HEK293 (cell line): ENCODE measurements at regions of chr14 and their contacts with region 1.

Region 1: GRCh38 chr14:69153131-69153872 is 383 bp upstream of the DCAF5 start:
- H3K4me3 ChIP-seq: peak overlapping the region; percentile 92
- H3K27ac ChIP-seq: peak overlapping the region; percentile 96
- H3K4me1 ChIP-seq: peaks cover 19% of the 10 kb centered on the region
- CTCF ChIP-seq: no peak

Region 2: DNA sequence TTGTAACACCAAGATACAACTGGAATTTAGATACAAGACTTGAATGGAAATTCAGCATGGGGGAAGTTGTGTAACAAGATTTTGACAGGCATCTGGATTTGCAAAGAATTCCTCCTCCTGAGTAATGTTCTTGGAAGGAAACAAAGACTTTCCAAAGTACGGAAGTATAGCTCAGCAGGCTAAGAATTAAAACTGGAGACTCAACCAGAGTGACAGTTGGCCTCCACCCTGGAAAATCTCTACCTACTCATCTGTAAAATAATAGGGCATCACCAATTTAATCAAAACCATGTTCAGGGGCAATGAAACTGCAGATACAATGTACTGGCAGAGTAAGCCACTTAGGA is 15.1 kb before region 1 on chr14:
- CTCF ChIA-PET with region 1: interaction called, 12 read pairs
- POLR2A ChIA-PET with region 1: interaction called, 3 read pairs
- H3K4me3 ChIP-seq: no peak overlapping the region
- H3K27ac ChIP-seq: no peak overlapping the region
- H3K4me1 ChIP-seq: peaks cover 39% of the 10 kb centered on the region
- CTCF ChIP-seq: no peak